ENCODE measurements at regions of chr13 and their contacts with region 1.

Region 1: DNA sequence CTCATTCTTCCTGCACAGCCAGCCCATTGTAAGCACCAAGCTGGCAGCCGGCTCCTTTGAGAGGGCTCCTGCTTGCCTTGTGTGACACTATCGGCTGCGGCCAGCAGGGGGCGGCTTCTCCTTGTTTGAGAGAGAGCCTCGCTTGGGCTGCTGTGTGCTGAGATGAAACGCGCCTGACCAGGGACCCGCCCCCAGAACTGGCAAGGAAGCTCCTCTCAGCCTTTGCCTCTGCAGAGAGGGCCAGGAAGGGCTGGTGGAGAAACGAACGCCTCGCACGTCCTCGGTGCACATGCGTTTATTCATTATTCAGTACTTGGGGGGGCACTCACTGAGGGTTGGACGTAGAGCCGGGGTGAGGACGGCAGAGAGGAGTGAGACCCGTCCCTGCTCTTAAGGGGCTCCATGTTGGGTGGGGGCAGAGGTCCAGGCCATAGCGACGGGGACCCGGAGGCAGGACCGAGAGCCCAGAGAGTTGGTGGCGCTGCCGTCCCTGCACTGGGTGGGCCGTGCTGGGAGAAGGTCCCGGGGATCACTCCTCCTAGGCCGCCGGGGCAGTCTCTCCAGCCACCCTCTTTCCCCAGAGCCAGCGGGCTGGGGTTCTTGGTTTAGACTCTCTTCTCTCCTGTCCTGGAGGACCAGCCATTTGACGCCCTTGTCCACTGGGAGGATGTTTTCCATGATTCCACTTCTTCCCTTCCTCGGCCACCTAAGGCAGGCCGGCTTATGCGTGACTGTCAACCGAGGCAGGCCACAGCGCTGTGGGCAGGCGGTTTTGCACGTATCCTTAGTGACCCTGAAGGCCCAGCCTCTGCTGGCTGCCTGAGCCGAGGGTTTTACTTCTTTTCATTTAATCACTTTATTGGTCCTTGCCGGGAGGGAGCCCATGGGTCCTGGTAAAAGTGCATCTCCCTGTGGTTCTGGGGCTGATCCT is 174.5 kb downstream of the KATNAL1 start:
- DNase-seq: peak; percentile 90 to 95 (median 94)
- H3K4me3 ChIP-seq: peak overlapping the region in 1 of 7 experiments; percentile 46
- H3K27ac ChIP-seq: no peak overlapping the region
- H3K4me1 ChIP-seq: peaks cover 0 to 4% (median 3%) of the 10 kb centered on the region in 4 experiments
- H3K27me3 ChIP-seq: no peaks in the 10 kb centered on the region

Region 2: DNA sequence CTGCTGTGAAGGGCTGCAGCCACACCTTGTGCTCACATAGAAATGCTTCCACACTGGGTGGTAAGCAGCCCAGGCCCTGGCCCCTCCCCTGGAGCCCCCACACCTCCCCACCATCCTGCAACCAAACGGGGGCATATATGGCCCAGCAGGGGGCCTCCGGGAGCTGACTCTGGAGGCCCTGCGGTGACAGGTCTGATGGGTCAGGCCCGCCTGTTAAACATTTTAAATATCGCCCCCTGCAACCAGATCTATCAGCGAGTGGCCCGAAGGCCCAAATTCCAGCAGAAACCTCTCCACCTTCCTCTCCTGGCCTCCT is 222.5 kb after region 1 on chr13:
- CTCF ChIA-PET with region 1: interaction called, 10 read pairs
- POLR2A ChIA-PET with region 1: no interaction called
- DNase-seq: peak; percentile 81 to 84 (median 84)
- H3K4me3 ChIP-seq: peak overlapping the region in 1 of 7 experiments; percentile 8
- H3K27ac ChIP-seq: no peak overlapping the region
- H3K4me1 ChIP-seq: peaks cover 1 to 18% (median 14%) of the 10 kb centered on the region in 4 experiments
- H3K27me3 ChIP-seq: no peaks in the 10 kb centered on the region

Region 3: GRCh38 chr13:30465585-30466357 is 332.9 kb after region 1 on chr13 and contains the start of gene HMGB1:
- CTCF ChIA-PET with region 1: interaction called, 15 read pairs
- POLR2A ChIA-PET with region 1: no interaction called
- DNase-seq: peak; percentile 97 to 99 (median 99)
- H3K4me3 ChIP-seq: peak within 1 kb of the TSS; percentile 77 to 92 (median 86)
- H3K27ac ChIP-seq: peak within 1 kb of the TSS; percentile 89 to 96
- H3K4me1 ChIP-seq: peaks cover 29 to 44% (median 35%) of the 10 kb centered on the region in 4 experiments
- H3K27me3 ChIP-seq: no peaks in the 10 kb centered on the region

Region 4: DNA sequence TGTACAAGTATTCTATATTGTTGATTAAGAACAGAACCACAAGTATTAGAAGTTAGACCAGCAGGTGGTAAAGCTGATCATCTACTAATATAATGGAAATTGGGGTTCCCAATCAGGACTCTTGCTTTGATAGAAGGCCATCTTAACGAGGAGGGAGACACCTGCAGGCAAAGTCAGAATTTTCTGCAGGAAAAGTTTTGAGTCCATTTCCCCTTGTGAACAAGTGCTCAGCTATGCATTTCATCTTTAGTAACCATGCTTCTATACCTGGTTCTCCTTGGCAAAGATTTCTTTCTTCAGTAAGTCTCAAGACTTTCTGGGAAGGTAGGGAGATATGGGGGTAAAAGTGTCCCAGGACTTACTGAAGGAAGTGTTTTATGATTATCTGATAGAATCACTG is 448.7 kb after region 1 on chr13:
- CTCF ChIA-PET with region 1: interaction called, 10 read pairs
- POLR2A ChIA-PET with region 1: no interaction called
- DNase-seq: peak; percentile 41 to 53 (median 51)
- H3K4me3 ChIP-seq: no peak overlapping the region
- H3K27ac ChIP-seq: no peak overlapping the region
- H3K4me1 ChIP-seq: peaks cover 5 to 27% (median 19%) of the 10 kb centered on the region in 4 experiments
- H3K27me3 ChIP-seq: no peaks in the 10 kb centered on the region